PC-9 (cell line): ENCODE measurements at regions of chr12 and their contacts with region 1.

Region 1: GRCh38 chr12:55073043-55074022 is 52.9 kb upstream of the OR9K2 start:
- DNase-seq: peak in 1 of 2 experiments; percentile 45
- H3K4me3 ChIP-seq: no peak overlapping the region
- H3K27ac ChIP-seq: no peak overlapping the region
- H3K4me1 ChIP-seq: no peaks in the 10 kb centered on the region
- H3K27me3 ChIP-seq: peaks cover 5% of the 10 kb centered on the region; the same call in 1 of the 2 replicates
- CTCF ChIP-seq: peak; percentile 87

Region 2: GRCh38 chr12:54579696-54580333 is 493.5 kb before region 1 on chr12:
- CTCF ChIA-PET with region 1: no interaction called
- POLR2A ChIA-PET with region 1: no interaction called
- intact Hi-C with region 1: loop called (anchors 1 kb)
- DNase-seq: peak in 1 of 2 experiments; percentile 75
- H3K4me3 ChIP-seq: no peak overlapping the region
- H3K27ac ChIP-seq: no peak overlapping the region
- H3K4me1 ChIP-seq: no peaks in the 10 kb centered on the region
- H3K27me3 ChIP-seq: peaks cover 94% of the 10 kb centered on the region
- CTCF ChIP-seq: peak; percentile 98

Region 3: GRCh38 chr12:54701940-54702592 is 371.3 kb before region 1 on chr12:
- CTCF ChIA-PET with region 1: no interaction called
- POLR2A ChIA-PET with region 1: no interaction called
- intact Hi-C with region 1: loop called (anchors 2 kb)
- DNase-seq: no peak
- H3K4me3 ChIP-seq: no peak overlapping the region
- H3K27ac ChIP-seq: no peak overlapping the region
- H3K4me1 ChIP-seq: no peaks in the 10 kb centered on the region
- H3K27me3 ChIP-seq: peaks cover 22% of the 10 kb centered on the region; the same call in 1 of the 2 replicates
- CTCF ChIP-seq: peak; percentile 75

Region 4: DNA sequence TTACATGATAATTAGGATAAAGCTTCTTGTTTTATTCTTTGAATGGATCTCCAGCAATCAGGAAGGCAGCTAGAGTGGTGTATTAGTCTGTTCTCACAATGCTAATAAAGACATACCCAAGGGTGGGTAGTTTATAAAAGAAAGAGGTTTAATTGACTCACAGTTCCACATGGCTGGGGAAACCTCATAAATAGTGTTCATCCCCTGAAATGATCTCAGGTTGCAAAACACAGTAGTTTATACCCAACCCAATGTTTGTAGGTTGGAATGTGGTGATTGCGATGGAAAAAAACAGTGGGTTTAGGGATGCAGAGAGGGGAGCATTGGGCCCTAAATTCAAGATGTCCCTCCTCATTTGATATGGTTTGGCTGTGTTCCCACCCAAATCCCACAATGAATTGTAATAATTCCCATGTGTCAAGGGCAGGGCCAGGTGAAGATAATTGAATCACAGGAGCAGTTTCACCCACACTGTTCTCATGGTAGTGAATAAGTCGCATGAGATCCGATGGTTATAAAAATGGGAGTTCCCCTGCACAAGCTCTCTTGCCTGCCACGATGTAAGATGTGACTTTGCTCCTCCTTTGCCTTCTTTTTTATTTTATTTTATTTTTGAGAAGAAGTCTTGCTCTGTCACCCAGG is 207.5 kb before region 1 on chr12:
- CTCF ChIA-PET with region 1: no interaction called
- POLR2A ChIA-PET with region 1: no interaction called
- intact Hi-C with region 1: loop called (anchors 10 kb)
- DNase-seq: no peak
- H3K4me3 ChIP-seq: no peak overlapping the region
- H3K27ac ChIP-seq: no peak overlapping the region
- H3K4me1 ChIP-seq: no peaks in the 10 kb centered on the region
- H3K27me3 ChIP-seq: peaks cover 22% of the 10 kb centered on the region; the same call in 1 of the 2 replicates
- CTCF ChIP-seq: no peak

Region 5: DNA sequence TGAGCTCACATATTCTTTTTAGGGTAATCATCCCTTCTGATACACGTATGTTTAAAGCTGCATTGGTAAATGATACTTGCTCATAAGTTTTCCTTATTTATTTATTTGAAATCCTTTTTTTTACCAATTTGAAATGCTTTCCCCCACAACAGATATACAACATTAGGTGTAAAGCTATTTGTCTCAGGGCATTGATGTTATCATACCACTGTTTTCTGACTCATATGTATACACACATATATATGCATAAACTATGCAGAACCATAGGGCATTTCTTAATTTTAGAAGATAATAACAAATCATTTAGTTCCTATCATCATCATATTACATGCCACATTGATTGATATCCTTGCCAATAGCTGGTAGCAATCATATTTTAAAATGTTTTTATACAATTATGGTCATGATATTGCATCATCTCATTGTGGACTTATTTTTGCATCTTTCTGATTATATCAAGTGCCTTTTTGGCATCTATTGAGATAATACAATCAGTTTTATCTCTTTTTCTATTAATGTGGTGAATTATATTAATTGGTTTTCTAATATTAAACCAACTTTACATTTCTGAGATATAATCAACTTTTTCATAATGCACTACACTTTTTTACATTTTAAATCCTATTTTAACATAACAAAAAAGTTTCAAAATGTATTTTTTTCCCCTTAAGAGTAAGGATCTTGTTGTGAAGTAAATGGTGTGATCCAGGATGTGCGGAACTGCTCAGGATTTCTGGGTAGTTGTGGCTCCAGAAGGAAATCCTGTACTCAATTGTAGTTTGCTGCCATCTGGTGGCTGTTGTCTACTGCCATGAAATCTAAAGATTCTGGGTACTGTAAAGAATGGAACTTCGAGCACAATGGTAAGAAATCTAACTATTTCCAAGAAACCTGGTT is 69.6 kb after region 1 on chr12:
- CTCF ChIA-PET with region 1: no interaction called
- POLR2A ChIA-PET with region 1: no interaction called
- intact Hi-C with region 1: loop called (anchors 1 kb)
- DNase-seq: peak in 1 of 2 experiments; percentile 10
- H3K4me3 ChIP-seq: no peak overlapping the region
- H3K27ac ChIP-seq: no peak overlapping the region
- H3K4me1 ChIP-seq: no peaks in the 10 kb centered on the region
- H3K27me3 ChIP-seq: peaks cover 3% of the 10 kb centered on the region; the same call in 1 of the 2 replicates
- CTCF ChIP-seq: peak; percentile 67